ENCODE measurements at regions of chr16 and their contacts with region 1.

Region 1: DNA sequence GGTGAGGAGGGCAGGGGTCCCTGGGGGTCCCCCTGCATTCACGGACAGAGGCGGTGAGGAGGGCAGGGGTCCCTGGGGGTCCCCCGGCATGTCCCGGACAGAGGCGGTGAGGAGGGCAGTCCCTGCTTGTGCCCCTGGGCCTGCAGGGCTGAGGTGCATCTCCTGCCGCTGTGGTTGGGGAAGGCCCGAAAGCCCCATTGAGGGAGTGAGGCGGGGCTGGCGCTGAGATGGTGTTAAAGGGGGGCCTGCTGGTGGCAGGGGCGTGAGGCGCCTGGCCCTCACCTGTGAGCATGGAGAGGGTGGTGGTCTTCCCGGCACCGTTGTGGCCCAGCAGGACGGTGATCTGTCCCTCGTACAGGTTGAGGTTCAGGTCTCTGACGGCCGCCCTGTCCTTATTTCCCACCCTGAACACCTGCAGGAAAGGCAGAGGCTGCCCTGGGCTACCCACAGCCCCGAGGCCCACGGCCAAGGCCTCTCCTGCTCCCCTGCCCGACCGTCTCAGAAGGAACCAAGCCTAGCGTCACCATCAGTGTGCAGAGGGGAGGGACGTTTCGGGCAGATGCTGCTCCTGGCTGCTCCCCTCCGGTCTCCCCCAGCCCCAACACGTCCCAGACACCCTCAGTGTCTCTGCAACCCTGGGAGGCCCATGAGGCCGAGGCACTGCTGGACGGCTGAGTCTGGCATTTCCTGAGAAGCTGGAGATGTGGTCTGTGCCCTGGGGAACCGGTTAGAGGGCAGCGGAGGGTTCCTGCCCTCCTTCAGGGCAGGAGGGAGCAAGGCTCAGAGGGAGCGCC is 31.4 kb upstream of the RNPS1 start:
- DNase-seq: no peak
- ATAC-seq: no peak
- H3K4me3 ChIP-seq: no peak overlapping the region
- H3K27ac ChIP-seq: no peak overlapping the region
- H3K4me1 ChIP-seq: peaks cover 0 to 4% (median 0%) of the 10 kb centered on the region in 9 donors
- H3K27me3 ChIP-seq: no peaks in the 10 kb centered on the region
- CTCF ChIP-seq: no peak

Region 2: DNA sequence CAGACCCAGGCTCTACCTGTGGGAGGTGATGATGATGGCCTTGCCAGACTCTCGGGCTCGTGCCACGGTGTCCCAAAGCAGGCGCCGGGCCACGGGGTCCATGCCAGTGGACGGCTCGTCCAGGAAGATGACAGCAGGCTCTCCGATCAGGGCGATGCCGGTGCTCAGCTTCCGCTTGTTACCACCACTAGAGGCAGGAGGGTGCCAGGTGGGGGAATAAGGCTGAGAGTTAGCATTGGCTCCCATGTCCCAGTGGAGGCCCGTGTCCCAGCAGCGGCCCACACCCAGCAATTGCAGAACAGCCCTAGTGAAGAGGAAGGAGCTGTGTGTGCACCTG is 21.1 kb before region 1 on chr16:
- intact Hi-C with region 1: loop called in 1 of 10 experiments (anchors 2 kb)
- DNase-seq: no peak
- ATAC-seq: no peak
- H3K4me3 ChIP-seq: no peak overlapping the region
- H3K27ac ChIP-seq: no peak overlapping the region
- H3K4me1 ChIP-seq: no peaks in the 10 kb centered on the region
- H3K27me3 ChIP-seq: no peaks in the 10 kb centered on the region
- CTCF ChIP-seq: no peak

Region 3: GRCh38 chr16:2326191-2326590 is 26.9 kb after region 1 on chr16:
- intact Hi-C with region 1: loop called in 1 of 10 experiments (anchors 2 kb)
- DNase-seq: no peak
- ATAC-seq: no peak
- H3K4me3 ChIP-seq: no peak overlapping the region
- H3K27ac ChIP-seq: no peak overlapping the region
- H3K4me1 ChIP-seq: no peaks in the 10 kb centered on the region
- H3K27me3 ChIP-seq: no peaks in the 10 kb centered on the region
- CTCF ChIP-seq: no peak

Measured in heart right ventricle (tissue), 16 donors.